ENCODE measurements at regions of chr16 and their contacts with region 1.

Region 1: DNA sequence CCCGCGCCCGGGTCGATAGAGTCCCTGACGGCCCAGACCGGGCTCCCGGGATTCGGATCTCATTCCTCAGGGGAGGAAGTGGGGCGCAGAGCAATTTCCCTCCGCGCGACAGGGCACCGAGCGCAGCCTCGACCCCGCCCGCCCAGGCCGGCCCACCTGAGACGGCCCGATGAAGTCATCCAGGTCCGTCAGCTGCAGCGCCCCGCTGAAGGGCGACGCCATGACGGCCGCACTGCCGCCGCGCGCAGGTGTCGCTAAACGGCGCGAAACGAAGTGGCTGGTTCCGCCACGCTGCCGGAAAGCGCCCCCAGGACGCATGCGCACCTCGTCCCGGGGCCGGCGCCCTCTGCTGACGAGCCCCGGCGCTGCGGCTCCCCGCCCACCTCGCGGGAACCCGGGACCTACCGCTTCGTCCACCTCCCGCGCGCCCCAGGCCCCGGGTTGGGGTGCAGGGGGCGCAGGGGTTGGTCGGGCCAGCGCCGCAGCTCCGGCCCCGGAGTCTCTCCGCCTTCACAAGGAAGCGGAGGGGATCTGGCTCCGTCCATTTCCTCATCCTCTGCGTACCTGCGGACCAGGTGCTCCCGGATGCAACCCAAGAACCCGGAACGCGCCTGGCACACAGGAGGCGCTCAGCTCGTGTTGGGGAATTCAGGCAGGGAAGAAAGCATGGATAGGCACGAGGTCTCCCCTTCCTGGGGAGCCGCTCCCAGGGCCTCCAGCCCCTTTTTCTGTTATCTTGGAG is at the start of gene CIAO3:
- DNase-seq: peak; percentile 80 to 98 (median 93)
- ATAC-seq: peak; percentile 96
- H3K4me3 ChIP-seq: peak within 1 kb of the TSS; percentile 85 to 90
- H3K4me3 Mint-ChIP-seq: peak within 1 kb of the TSS; percentile 82
- H3K27ac ChIP-seq: peak within 1 kb of the TSS; percentile 74 to 78
- H3K27ac Mint-ChIP-seq: peak within 1 kb of the TSS; percentile 57
- H3K4me1 ChIP-seq: peaks cover 9% of the 10 kb centered on the region
- H3K4me1 Mint-ChIP-seq: peaks cover 8% of the 10 kb centered on the region
- H3K27me3 ChIP-seq: no peaks in the 10 kb centered on the region
- H3K27me3 Mint-ChIP-seq: no peaks in the 10 kb centered on the region
- CTCF ChIP-seq: peak; percentile 93
- total RNA-seq, gene CIAO3: 25.7 to 30.0 TPM

Region 2: GRCh38 chr16:391885-392335 is 349.0 kb before region 1 on chr16:
- CTCF ChIA-PET with region 1: no interaction called
- POLR2A ChIA-PET with region 1: no interaction called
- intact Hi-C with region 1: loop called in 1 of 2 experiments (anchors 5 kb)
- DNase-seq: peak; percentile 55 to 93 (median 81)
- ATAC-seq: peak; percentile 95
- H3K4me3 ChIP-seq: no peak overlapping the region
- H3K4me3 Mint-ChIP-seq: no peak overlapping the region
- H3K27ac ChIP-seq: peak overlapping the region in 1 of 2 experiments; percentile 64
- H3K27ac Mint-ChIP-seq: no peak overlapping the region
- H3K4me1 ChIP-seq: peaks cover 18% of the 10 kb centered on the region
- H3K4me1 Mint-ChIP-seq: peaks cover 18% of the 10 kb centered on the region
- H3K27me3 ChIP-seq: no peaks in the 10 kb centered on the region
- H3K27me3 Mint-ChIP-seq: no peaks in the 10 kb centered on the region
- CTCF ChIP-seq: peak; percentile 77

Region 3: DNA sequence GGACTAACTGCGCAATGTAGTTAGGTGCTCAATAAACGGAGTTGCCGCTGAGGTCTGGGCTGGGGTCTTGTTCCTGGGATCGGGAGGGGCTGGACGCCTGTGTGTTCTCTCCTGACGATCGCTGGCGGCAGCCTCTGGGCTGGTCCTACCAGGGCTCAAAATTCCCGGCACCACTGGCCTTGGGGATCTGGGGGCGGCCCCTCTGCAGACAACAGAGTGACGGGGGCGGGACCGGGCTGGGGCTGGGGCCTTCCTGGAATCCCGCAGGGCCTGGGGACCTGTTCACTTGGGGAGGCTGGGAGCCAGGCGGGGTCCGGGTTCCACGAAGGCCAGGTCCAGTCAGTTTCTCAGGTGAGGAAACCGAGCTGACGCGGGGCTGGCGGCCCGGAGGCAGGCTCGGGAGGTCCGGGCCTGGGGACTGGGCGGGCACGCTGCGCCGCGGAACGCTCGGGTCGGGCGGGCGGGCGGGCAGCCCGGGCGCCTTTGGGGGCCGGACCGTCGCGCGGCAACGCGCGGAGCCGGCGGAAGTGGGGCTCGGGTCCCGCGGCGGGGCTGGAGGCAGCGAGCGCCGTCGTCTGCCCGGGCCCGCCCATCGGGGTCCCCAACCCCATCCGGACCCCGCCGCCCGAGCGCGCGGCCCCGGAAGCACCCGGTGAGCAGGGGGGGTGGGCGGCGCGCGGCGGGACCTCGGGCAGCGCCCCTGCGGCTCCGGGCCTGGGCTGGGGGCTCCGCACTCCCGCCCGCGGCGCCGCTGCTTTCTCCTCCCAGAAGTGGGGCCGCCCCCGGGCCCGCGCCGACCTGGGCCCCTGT is 171.3 kb before region 1 on chr16 and contains the start of gene PIGQ:
- CTCF ChIA-PET with region 1: no interaction called
- POLR2A ChIA-PET with region 1: no interaction called
- intact Hi-C with region 1: loop called in 1 of 2 experiments (anchors 1 kb)
- DNase-seq: peak; percentile 40 to 81 (median 59)
- ATAC-seq: peak; percentile 77
- H3K4me3 ChIP-seq: peak within 1 kb of the TSS; percentile 66 to 84
- H3K4me3 Mint-ChIP-seq: peak within 1 kb of the TSS; percentile 83
- H3K27ac ChIP-seq: peak within 1 kb of the TSS; percentile 65 to 82
- H3K27ac Mint-ChIP-seq: peak within 1 kb of the TSS; percentile 89
- H3K4me1 ChIP-seq: peaks cover 44% of the 10 kb centered on the region
- H3K4me1 Mint-ChIP-seq: peaks cover 32% of the 10 kb centered on the region
- H3K27me3 ChIP-seq: no peaks in the 10 kb centered on the region
- H3K27me3 Mint-ChIP-seq: no peaks in the 10 kb centered on the region
- CTCF ChIP-seq: no peak
- total RNA-seq, gene PIGQ: 25.9 to 31.0 TPM

Region 4: GRCh38 chr16:695355-696089 is 45.4 kb before region 1 on chr16:
- CTCF ChIA-PET with region 1: interaction called, 10 read pairs
- POLR2A ChIA-PET with region 1: no interaction called
- intact Hi-C with region 1: no loop called
- DNase-seq: peak; percentile 41 to 85 (median 62)
- ATAC-seq: peak; percentile 76
- H3K4me3 ChIP-seq: peak overlapping the region; percentile 58 to 59
- H3K4me3 Mint-ChIP-seq: peak overlapping the region; percentile 77
- H3K27ac ChIP-seq: peak overlapping the region in 1 of 2 experiments; percentile 45
- H3K27ac Mint-ChIP-seq: peak overlapping the region; percentile 66
- H3K4me1 ChIP-seq: peaks cover 42% of the 10 kb centered on the region
- H3K4me1 Mint-ChIP-seq: peaks cover 28% of the 10 kb centered on the region
- H3K27me3 ChIP-seq: peaks cover 0 to 17% of the 10 kb centered on the region in 2 experiments
- H3K27me3 Mint-ChIP-seq: no peaks in the 10 kb centered on the region
- CTCF ChIP-seq: no peak

Region 5: GRCh38 chr16:720990-721764 is 19.8 kb before region 1 on chr16 and contains the start of gene ANTKMT:
- CTCF ChIA-PET with region 1: interaction called, 353 read pairs
- POLR2A ChIA-PET with region 1: interaction called, 6 read pairs
- intact Hi-C with region 1: loop called in 1 of 2 experiments (anchors 2 kb)
- DNase-seq: peak; percentile 51 to 91 (median 77)
- ATAC-seq: peak; percentile 64
- H3K4me3 ChIP-seq: peak within 1 kb of the TSS; percentile 79 to 86
- H3K4me3 Mint-ChIP-seq: peak within 1 kb of the TSS; percentile 86
- H3K27ac ChIP-seq: peak within 1 kb of the TSS; percentile 72 to 80
- H3K27ac Mint-ChIP-seq: peak within 1 kb of the TSS; percentile 86
- H3K4me1 ChIP-seq: peaks cover 45% of the 10 kb centered on the region
- H3K4me1 Mint-ChIP-seq: peaks cover 44% of the 10 kb centered on the region
- H3K27me3 ChIP-seq: peaks cover 0 to under 1% of the 10 kb centered on the region in 2 experiments
- H3K27me3 Mint-ChIP-seq: no peaks in the 10 kb centered on the region
- CTCF ChIP-seq: no peak
- total RNA-seq, gene ANTKMT: 24.7 to 29.6 TPM

Region 6: DNA sequence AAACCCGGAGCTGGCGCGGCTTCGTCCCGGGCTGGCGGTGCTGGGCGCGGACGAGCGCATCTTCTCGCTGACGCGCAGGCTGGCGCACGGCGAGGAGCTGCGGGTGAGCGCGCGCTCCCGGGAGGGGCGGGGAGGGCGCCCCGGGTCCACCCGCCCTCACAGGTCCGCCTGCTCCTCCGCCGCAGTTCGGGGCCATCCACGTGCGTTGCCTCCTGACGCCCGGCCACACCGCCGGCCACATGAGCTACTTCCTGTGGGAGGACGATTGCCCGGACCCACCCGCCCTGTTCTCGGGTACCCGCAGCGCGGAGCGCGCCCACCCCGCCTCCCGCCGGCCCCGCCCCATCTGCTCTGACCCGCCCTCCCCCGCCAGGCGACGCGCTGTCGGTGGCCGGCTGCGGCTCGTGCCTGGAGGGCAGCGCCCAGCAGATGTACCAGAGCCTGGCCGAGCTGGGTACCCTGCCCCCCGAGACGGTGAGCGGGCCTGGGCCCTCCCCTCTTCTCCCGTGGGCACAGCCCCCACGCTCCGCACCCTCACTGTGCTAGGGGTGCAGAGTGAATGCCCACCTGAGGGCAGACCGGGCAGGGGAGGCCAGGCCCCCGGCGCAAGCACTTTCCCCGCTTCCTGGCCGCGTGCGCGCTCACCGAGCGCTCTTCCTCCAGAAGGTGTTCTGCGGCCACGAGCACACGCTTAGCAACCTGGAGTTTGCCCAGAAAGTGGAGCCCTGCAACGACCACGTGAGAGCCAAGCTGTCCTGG is 12.6 kb before region 1 on chr16:
- CTCF ChIA-PET with region 1: interaction called, 353 read pairs
- POLR2A ChIA-PET with region 1: interaction called, 6 read pairs
- intact Hi-C with region 1: loop called in 1 of 2 experiments (anchors 1 kb)
- DNase-seq: peak in 8 of 9 experiments; percentile 42 to 93 (median 68)
- ATAC-seq: peak; percentile 69
- H3K4me3 ChIP-seq: peak overlapping the region; percentile 33 to 46
- H3K4me3 Mint-ChIP-seq: peak overlapping the region; percentile 65
- H3K27ac ChIP-seq: no peak overlapping the region
- H3K27ac Mint-ChIP-seq: no peak overlapping the region
- H3K4me1 ChIP-seq: peaks cover 14% of the 10 kb centered on the region
- H3K4me1 Mint-ChIP-seq: peaks cover 12% of the 10 kb centered on the region
- H3K27me3 ChIP-seq: no peaks in the 10 kb centered on the region
- H3K27me3 Mint-ChIP-seq: no peaks in the 10 kb centered on the region
- CTCF ChIP-seq: no peak

Region 7: GRCh38 chr16:788394-789126 is 47.6 kb after region 1 on chr16 and contains the start of gene CHTF18:
- CTCF ChIA-PET with region 1: interaction called, 8 read pairs
- POLR2A ChIA-PET with region 1: no interaction called
- intact Hi-C with region 1: loop called (anchors 1 kb)
- DNase-seq: peak; percentile 88 to 96 (median 92)
- ATAC-seq: peak; percentile 98
- H3K4me3 ChIP-seq: peak within 1 kb of the TSS; percentile 81 to 97
- H3K4me3 Mint-ChIP-seq: peak within 1 kb of the TSS; percentile 84
- H3K27ac ChIP-seq: peak within 1 kb of the TSS; percentile 10 to 53
- H3K27ac Mint-ChIP-seq: peak within 1 kb of the TSS; percentile 49
- H3K4me1 ChIP-seq: peaks cover 19% of the 10 kb centered on the region
- H3K4me1 Mint-ChIP-seq: peaks cover 7% of the 10 kb centered on the region
- H3K27me3 ChIP-seq: no peaks in the 10 kb centered on the region
- H3K27me3 Mint-ChIP-seq: no peaks in the 10 kb centered on the region
- CTCF ChIP-seq: no peak
- total RNA-seq, gene CHTF18: 34.4 to 38.4 TPM